Aorta (tissue), 5 donors: ENCODE measurements at regions of chr4 and their contacts with region 1.

Region 1: DNA sequence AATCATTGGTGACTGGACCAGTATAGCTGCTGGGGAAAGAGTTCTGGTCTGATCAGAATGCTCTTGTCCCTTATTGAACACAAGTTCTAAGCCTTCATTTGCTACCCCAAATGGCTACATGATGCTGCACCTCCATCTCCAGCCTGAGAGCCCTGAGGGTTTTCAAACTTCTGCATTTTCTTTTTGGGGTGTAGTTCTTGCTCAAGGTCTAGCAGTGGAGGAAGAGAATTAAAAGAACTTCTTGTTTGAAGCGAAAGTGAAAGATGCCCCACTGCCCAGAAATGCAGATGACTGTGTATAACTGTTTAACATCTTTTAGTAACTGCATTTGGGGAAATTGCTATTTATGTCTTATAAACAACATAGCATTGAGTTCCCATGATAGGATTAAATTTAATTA is 38.5 kb downstream of the LAMTOR3 start:
- DNase-seq: no peak
- ATAC-seq: peak; percentile 29
- H3K4me3 ChIP-seq: no peak overlapping the region
- H3K27ac ChIP-seq: no peak overlapping the region
- H3K4me1 ChIP-seq: no peaks in the 10 kb centered on the region
- H3K27me3 ChIP-seq: no peaks in the 10 kb centered on the region

Region 2: GRCh38 chr4:99835942-99836341 is 19.7 kb before region 1 on chr4:
- intact Hi-C with region 1: loop called in 1 of 2 experiments (anchors 1 kb)
- DNase-seq: no peak
- ATAC-seq: no peak
- H3K4me3 ChIP-seq: no peak overlapping the region
- H3K27ac ChIP-seq: no peak overlapping the region
- H3K4me1 ChIP-seq: peaks cover 0 to 2% of the 10 kb centered on the region in 2 donors
- H3K27me3 ChIP-seq: no peaks in the 10 kb centered on the region